WTC11 (cell line): ENCODE measurements at regions of chr17 and their contacts with region 1.

Region 1: GRCh38 chr17:3683054-3683511 is 12.9 kb downstream of the P2RX5 start:
- DNase-seq: peak; percentile 64
- ATAC-seq: peak; percentile 85
- H3K4me3 Mint-ChIP-seq: no peak overlapping the region
- H3K27ac Mint-ChIP-seq: no peak overlapping the region
- H3K4me1 Mint-ChIP-seq: 0 out of 2 replicates have a peak, but pooled peaks cover 5% of the 10 kb centered on the region
- H3K27me3 Mint-ChIP-seq: no peaks in the 10 kb centered on the region; the same call in none of the 2 replicates
- CTCF ChIP-seq: peak; percentile 98

Region 2: GRCh38 chr17:3389791-3390190 is 293.3 kb before region 1 on chr17:
- CTCF ChIA-PET with region 1: no interaction called
- POLR2A ChIA-PET with region 1: no interaction called
- DNase-seq: no peak
- ATAC-seq: no peak
- H3K4me3 Mint-ChIP-seq: no peak overlapping the region
- H3K27ac Mint-ChIP-seq: no peak overlapping the region
- H3K4me1 Mint-ChIP-seq: peaks cover 5% of the 10 kb centered on the region; the same call in 1 of the 2 replicates
- H3K27me3 Mint-ChIP-seq: peaks cover 30% of the 10 kb centered on the region
- CTCF ChIP-seq: no peak

Region 3: GRCh38 chr17:3602499-3602898 is 80.6 kb before region 1 on chr17:
- CTCF ChIA-PET with region 1: interaction called, 14 read pairs
- POLR2A ChIA-PET with region 1: no interaction called
- DNase-seq: peak; percentile 56
- ATAC-seq: peak; percentile 83
- H3K4me3 Mint-ChIP-seq: no peak overlapping the region
- H3K27ac Mint-ChIP-seq: no peak overlapping the region
- H3K4me1 Mint-ChIP-seq: no peaks in the 10 kb centered on the region
- H3K27me3 Mint-ChIP-seq: no peaks in the 10 kb centered on the region; the same call in 1 of the 2 replicates
- CTCF ChIP-seq: peak; percentile 54

Region 4: GRCh38 chr17:3647769-3648555 is 35.1 kb before region 1 on chr17:
- CTCF ChIA-PET with region 1: interaction called, 15 read pairs
- POLR2A ChIA-PET with region 1: no interaction called
- DNase-seq: peak; percentile 58
- ATAC-seq: peak; percentile 93
- H3K4me3 Mint-ChIP-seq: no peak overlapping the region
- H3K27ac Mint-ChIP-seq: peak overlapping the region; percentile 17; the same call in 1 of the 2 replicates
- H3K4me1 Mint-ChIP-seq: no peaks in the 10 kb centered on the region
- H3K27me3 Mint-ChIP-seq: no peaks in the 10 kb centered on the region
- CTCF ChIP-seq: no peak

Region 5: GRCh38 chr17:3695723-3696411 is 12.8 kb after region 1 on chr17 and contains the start of gene P2RX5:
- CTCF ChIA-PET with region 1: interaction called, 85 read pairs
- POLR2A ChIA-PET with region 1: no interaction called
- DNase-seq: peak; percentile 58
- ATAC-seq: peak; percentile 24
- H3K4me3 Mint-ChIP-seq: peak within 1 kb of the TSS; percentile 75
- H3K27ac Mint-ChIP-seq: no peak within 1 kb of the TSS
- H3K4me1 Mint-ChIP-seq: peaks cover 10% of the 10 kb centered on the region
- H3K27me3 Mint-ChIP-seq: peaks cover 35% of the 10 kb centered on the region
- CTCF ChIP-seq: no peak
- total RNA-seq, gene P2RX5: 6.4 to 9.5 TPM (median 8.8 TPM) in 3 replicates

Region 6: DNA sequence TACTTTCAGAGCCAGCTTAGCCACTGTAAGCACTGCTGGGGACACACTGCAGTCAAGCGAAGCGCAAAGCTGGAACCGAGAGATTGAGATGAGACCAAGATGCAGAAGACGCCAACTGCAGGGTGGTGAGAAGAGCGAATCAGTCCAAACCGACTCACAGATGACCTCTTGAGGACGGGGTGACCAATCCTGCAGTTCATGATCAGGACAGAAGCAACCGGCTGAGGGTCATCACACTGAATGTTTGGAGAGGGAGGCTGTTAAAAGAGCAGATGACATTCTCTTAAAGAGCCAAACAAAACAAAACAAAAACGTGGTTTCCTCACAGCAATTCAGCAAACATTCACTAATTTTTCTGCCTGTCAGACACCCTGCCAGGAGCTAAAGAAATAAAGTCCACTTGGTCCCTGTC is 49.1 kb after region 1 on chr17:
- CTCF ChIA-PET with region 1: interaction called, 27 read pairs
- POLR2A ChIA-PET with region 1: no interaction called
- DNase-seq: no peak
- ATAC-seq: peak; percentile 29; the same call in 1 of the 2 replicates
- H3K4me3 Mint-ChIP-seq: no peak overlapping the region
- H3K27ac Mint-ChIP-seq: peak overlapping the region; percentile 24; the same call in 1 of the 2 replicates
- H3K4me1 Mint-ChIP-seq: peaks cover 7% of the 10 kb centered on the region
- H3K27me3 Mint-ChIP-seq: no peaks in the 10 kb centered on the region
- CTCF ChIP-seq: no peak

Region 7: GRCh38 chr17:3845621-3846441 is 162.7 kb after region 1 on chr17 and contains the start of gene NCBP3:
- CTCF ChIA-PET with region 1: interaction called, 10 read pairs
- POLR2A ChIA-PET with region 1: no interaction called
- DNase-seq: peak; percentile 84
- ATAC-seq: peak; percentile 96
- H3K4me3 Mint-ChIP-seq: peak within 1 kb of the TSS; percentile 93
- H3K27ac Mint-ChIP-seq: peak within 1 kb of the TSS; percentile 93
- H3K4me1 Mint-ChIP-seq: peaks cover 18% of the 10 kb centered on the region
- H3K27me3 Mint-ChIP-seq: no peaks in the 10 kb centered on the region
- CTCF ChIP-seq: peak; percentile 73
- total RNA-seq, gene NCBP3: 48.7 to 51.3 TPM (median 49.6 TPM) in 3 replicates